B cell (primary cell): ENCODE measurements at regions of chr16 and their contacts with region 1.

Region 1: DNA sequence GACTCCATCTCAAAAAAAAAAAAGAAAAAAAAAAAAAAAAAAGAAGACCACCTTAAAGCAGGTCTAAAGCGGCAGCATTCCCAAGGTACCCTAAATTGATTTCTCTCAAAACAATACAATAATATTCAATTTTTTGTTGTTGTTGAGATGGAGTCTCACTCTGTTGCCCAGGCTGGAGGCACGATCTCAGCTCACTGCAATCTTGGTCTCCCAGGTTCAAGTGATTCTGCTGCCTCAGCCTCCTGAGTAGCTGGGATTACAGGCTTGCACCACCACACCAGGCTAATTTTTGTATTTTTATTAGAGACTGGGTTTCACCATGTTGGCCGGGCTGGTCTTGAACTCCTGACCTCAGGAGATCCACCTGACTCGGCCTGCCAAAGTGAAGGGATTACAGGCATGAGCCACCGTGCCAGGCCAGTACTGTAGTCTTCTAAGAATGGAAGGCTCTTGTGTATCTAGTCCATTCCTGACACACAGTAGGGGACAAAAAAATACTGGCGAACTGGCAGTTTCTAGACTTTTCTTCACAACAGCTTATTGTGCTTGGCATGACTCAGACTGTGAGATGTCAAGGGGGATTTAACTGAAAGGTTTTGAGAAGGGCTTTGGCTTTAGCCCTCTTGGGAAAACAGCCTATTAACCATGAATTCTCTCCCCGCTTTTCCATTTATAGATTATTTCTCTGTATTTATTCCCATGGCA is 17.3 kb downstream of the CDR2 start:
- DNase-seq: no peak
- ATAC-seq: peak; percentile 22
- H3K4me3 ChIP-seq: peak overlapping the region in 1 of 5 experiments; percentile 27
- H3K4me3 Mint-ChIP-seq: peak overlapping the region; percentile 44
- H3K27ac ChIP-seq: no peak overlapping the region
- H3K27ac Mint-ChIP-seq: peak overlapping the region; percentile 78
- H3K4me1 ChIP-seq: peaks cover 14 to 26% of the 10 kb centered on the region in 2 donors
- H3K4me1 Mint-ChIP-seq: peaks cover 31% of the 10 kb centered on the region
- H3K27me3 ChIP-seq: no peaks in the 10 kb centered on the region
- H3K27me3 Mint-ChIP-seq: no peaks in the 10 kb centered on the region
- CTCF ChIP-seq: no peak

Region 2: GRCh38 chr16:20944861-20945574 is 1412.1 kb before region 1 on chr16:
- CTCF ChIA-PET with region 1: no interaction called
- POLR2A ChIA-PET with region 1: interaction called, 10 read pairs
- intact Hi-C with region 1: no loop called
- DNase-seq: peak; percentile 13
- ATAC-seq: no peak
- H3K4me3 ChIP-seq: no peak overlapping the region
- H3K4me3 Mint-ChIP-seq: no peak overlapping the region
- H3K27ac ChIP-seq: no peak overlapping the region
- H3K27ac Mint-ChIP-seq: no peak overlapping the region
- H3K4me1 ChIP-seq: no peaks in the 10 kb centered on the region
- H3K4me1 Mint-ChIP-seq: peaks cover 4% of the 10 kb centered on the region
- H3K27me3 ChIP-seq: no peaks in the 10 kb centered on the region
- H3K27me3 Mint-ChIP-seq: no peaks in the 10 kb centered on the region
- CTCF ChIP-seq: no peak